ENCODE measurements at regions of chr6 and their contacts with region 1.

Region 1: DNA sequence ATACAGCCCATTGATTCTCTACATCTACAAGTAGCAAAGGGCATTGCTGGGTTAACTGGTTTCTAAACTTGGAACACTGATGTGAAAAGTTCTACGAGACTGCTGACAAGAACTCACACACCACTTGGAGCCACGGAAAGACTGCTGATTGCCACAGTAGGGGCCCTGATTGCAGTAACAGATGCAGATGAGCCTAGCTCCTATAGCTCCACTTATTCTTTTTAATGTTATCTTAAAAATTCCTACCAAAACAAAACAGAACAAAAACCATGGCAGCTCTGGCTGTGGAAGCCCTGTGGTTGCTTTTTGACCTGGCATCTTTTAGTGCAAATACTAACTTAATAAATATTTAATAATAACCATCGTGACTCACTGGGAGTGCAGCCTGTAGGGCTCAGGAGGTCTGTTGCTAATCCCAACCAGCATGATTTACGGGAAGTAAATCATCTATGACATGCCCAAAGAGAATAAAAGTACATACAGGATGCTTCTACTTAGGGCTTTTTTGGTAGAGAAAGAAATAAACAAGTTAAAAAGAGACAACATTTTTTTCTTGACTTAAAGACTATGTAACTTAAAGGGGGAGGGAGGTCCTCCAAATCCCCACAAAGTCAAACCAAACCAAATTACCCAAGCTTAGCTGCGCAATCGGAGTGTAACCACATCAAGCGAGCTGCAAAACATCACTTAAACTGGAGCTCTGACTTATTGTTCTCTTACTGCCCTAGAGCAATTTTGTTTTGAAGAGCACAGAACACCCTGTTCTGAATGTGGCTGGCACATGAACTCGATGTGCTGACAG is 87.2 kb downstream of the FKBP5 start:
- DNase-seq: peak; percentile 52 to 60 (median 57)
- H3K4me3 ChIP-seq: peak overlapping the region; percentile 3 to 58 (median 28)
- H3K4me3 Mint-ChIP-seq: peak overlapping the region; percentile 27 to 83
- H3K27ac ChIP-seq: peak overlapping the region; percentile 63 to 91
- H3K27ac Mint-ChIP-seq: peak overlapping the region; percentile 82 to 91 (median 89)
- H3K4me1 ChIP-seq: peaks cover 41 to 50% of the 10 kb centered on the region in 2 donors
- H3K4me1 Mint-ChIP-seq: peaks cover 55% of the 10 kb centered on the region
- H3K27me3 ChIP-seq: no peaks in the 10 kb centered on the region
- H3K27me3 Mint-ChIP-seq: no peaks in the 10 kb centered on the region
- CTCF ChIP-seq: no peak

Region 2: GRCh38 chr6:35669451-35670045 is 68.0 kb after region 1 on chr6:
- intact Hi-C with region 1: loop called in 1 of 2 experiments (anchors 10 kb)
- DNase-seq: peak in 2 of 3 donors; percentile 17 to 35
- H3K4me3 ChIP-seq: peak overlapping the region; percentile 12 to 59 (median 34)
- H3K4me3 Mint-ChIP-seq: peak overlapping the region in 1 of 2 donors; percentile 75
- H3K27ac ChIP-seq: peak overlapping the region in 1 of 2 donors; percentile 75
- H3K27ac Mint-ChIP-seq: peak overlapping the region; percentile 64 to 90 (median 73)
- H3K4me1 ChIP-seq: peaks cover 30 to 45% of the 10 kb centered on the region in 2 donors
- H3K4me1 Mint-ChIP-seq: peaks cover 40% of the 10 kb centered on the region
- H3K27me3 ChIP-seq: no peaks in the 10 kb centered on the region
- H3K27me3 Mint-ChIP-seq: peaks cover 0 to 1% (median 0%) of the 10 kb centered on the region in 3 donors
- CTCF ChIP-seq: no peak

Measured in CD14-positive monocyte (primary cell).